CD8-positive, alpha-beta memory T cell (primary cell): ENCODE measurements at regions of chr16 and their contacts with region 1.

Region 1: DNA sequence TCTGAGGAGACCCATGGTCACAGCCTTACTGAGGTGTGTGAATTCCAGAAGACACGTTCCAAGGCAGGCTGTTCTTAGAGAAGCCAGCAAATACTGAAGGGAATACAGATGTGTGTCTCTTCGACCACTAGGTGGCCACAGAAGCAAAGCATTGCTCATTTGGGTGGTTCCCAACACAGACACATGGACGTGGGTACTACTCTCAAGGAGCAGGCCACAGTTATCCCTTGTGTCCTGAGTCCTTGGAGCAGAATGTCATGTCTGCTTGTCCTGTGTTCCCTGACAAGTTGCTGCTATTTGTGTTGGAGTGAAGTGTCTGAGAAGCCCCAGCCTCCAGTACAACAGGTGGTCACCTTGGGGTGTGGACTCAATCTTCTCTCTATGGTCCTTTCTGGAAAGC is 30.3 kb downstream of the HMOX2 start:
- DNase-seq: peak; percentile 26 to 72 (median 59)
- H3K4me3 ChIP-seq: peak overlapping the region; percentile 65
- H3K4me3 Mint-ChIP-seq: peak overlapping the region; percentile 55 to 85 (median 77)
- H3K27ac ChIP-seq: peak overlapping the region; percentile 72
- H3K27ac Mint-ChIP-seq: peak overlapping the region; percentile 94 to 100 (median 98)
- H3K4me1 ChIP-seq: peaks cover 54% of the 10 kb centered on the region
- H3K4me1 Mint-ChIP-seq: peaks cover 53 to 67% (median 58%) of the 10 kb centered on the region in 3 donors
- H3K27me3 ChIP-seq: no peaks in the 10 kb centered on the region
- H3K27me3 Mint-ChIP-seq: peaks cover 0 to 2% of the 10 kb centered on the region in 2 donors

Region 2: GRCh38 chr16:4350787-4351659 is 155.4 kb before region 1 on chr16 and contains the start of gene PAM16:
- CTCF ChIA-PET with region 1: no interaction called
- POLR2A ChIA-PET with region 1: no interaction called
- DNase-seq: peak; percentile 98
- H3K4me3 ChIP-seq: peak within 1 kb of the TSS; percentile 70
- H3K4me3 Mint-ChIP-seq: peak within 1 kb of the TSS; percentile 91 to 99 (median 93)
- H3K27ac ChIP-seq: peak within 1 kb of the TSS; percentile 73
- H3K27ac Mint-ChIP-seq: peak within 1 kb of the TSS; percentile 84 to 99 (median 92)
- H3K4me1 ChIP-seq: peaks cover 16% of the 10 kb centered on the region
- H3K4me1 Mint-ChIP-seq: peaks cover 20 to 41% (median 27%) of the 10 kb centered on the region in 3 donors
- H3K27me3 ChIP-seq: no peaks in the 10 kb centered on the region
- H3K27me3 Mint-ChIP-seq: peaks cover 0 to 3% of the 10 kb centered on the region in 2 donors
- total RNA-seq, gene PAM16: 66.6 to 70.2 TPM

Region 3: DNA sequence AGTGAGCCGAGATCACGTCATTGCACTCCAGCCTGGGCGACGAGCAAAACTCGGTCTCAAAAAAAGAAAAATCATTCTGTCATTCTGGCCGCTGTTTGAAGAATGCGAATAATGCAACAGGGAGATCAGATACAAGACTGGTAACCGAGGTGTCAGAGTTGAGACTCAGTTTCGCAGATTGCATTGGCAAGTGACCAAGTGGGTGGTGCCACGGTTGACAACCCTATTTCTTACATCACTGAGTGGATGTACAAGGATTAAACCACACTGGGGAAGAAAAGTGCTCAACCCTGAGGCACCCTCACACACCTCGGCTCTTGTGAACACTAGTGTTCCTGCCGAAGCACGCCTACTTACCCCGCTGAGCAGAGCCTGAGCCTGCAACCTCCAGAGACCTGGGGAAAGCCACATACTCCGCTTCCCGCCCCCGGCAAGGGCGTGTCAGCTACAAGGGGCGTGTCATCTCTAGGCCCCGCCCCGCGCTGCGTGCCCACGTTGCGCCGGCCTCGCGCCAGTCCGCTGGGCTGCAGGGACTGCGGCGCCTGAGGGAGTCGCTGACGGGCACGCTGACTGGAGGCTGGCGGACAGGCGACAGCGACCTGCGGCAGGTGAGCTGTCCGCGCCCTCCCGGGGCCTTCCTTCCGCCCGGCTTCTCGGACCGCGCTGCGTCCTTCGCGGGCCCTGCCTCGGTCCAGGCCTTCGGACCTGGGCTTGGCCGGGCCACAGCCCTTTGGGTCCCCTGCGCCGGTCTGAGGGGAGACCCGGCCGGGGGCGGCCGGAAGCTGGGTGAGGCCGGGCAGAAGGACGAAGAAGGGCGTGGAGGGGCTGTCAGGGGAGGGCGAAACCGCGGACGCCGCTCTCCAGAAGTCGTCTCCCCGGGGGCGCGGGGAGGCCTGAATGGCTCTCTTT is 30.3 kb before region 1 on chr16 and contains the start of gene HMOX2:
- CTCF ChIA-PET with region 1: interaction called, 87 read pairs
- POLR2A ChIA-PET with region 1: interaction called, 42 read pairs
- DNase-seq: peak; percentile 87 to 93 (median 91)
- H3K4me3 ChIP-seq: peak within 1 kb of the TSS; percentile 55
- H3K4me3 Mint-ChIP-seq: peak within 1 kb of the TSS; percentile 92 to 99 (median 93)
- H3K27ac ChIP-seq: peak within 1 kb of the TSS; percentile 85
- H3K27ac Mint-ChIP-seq: peak within 1 kb of the TSS; percentile 85 to 97 (median 94)
- H3K4me1 ChIP-seq: peaks cover 44% of the 10 kb centered on the region
- H3K4me1 Mint-ChIP-seq: peaks cover 38 to 58% (median 52%) of the 10 kb centered on the region in 3 donors
- H3K27me3 ChIP-seq: no peaks in the 10 kb centered on the region
- H3K27me3 Mint-ChIP-seq: no peaks in the 10 kb centered on the region
- total RNA-seq, gene HMOX2: 87.5 to 95.2 TPM

Region 4: DNA sequence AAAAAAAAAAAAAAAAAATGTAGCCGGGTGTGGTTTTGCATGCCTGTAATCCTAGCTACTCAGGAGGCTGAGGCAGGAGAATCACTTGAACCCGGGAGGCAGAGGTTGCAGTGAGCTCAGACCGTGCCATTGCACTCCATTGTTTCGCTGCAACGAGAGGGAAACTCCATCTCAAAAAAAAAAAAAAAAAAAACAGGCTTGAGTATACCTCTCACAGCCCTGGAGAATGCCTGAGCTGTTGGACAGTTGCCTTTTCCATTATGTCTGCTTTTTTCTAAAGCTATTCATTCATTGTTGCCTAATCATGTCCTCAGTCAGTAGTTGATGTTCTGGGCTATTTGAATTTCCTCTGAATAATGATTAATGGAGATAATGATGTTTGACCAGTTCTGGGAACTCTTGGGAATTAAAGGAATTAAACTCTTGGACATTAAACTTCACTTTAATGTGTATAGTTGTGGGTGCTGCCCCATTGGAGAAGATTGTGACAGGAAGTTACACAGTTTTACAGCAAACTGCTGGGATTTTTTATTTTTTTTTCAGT is 18.4 kb before region 1 on chr16:
- CTCF ChIA-PET with region 1: interaction called, 27 read pairs
- POLR2A ChIA-PET with region 1: interaction called, 14 read pairs
- DNase-seq: no peak
- H3K4me3 ChIP-seq: peak overlapping the region; percentile 20
- H3K4me3 Mint-ChIP-seq: peak overlapping the region; percentile 51 to 79 (median 70)
- H3K27ac ChIP-seq: peak overlapping the region; percentile 51
- H3K27ac Mint-ChIP-seq: peak overlapping the region; percentile 90 to 99 (median 94)
- H3K4me1 ChIP-seq: peaks cover 64% of the 10 kb centered on the region
- H3K4me1 Mint-ChIP-seq: peaks cover 51 to 74% (median 66%) of the 10 kb centered on the region in 3 donors
- H3K27me3 ChIP-seq: no peaks in the 10 kb centered on the region
- H3K27me3 Mint-ChIP-seq: no peaks in the 10 kb centered on the region

Region 5: GRCh38 chr16:4538350-4539235 is 32.1 kb after region 1 on chr16 and contains the start of gene CDIP1:
- CTCF ChIA-PET with region 1: interaction called, 11 read pairs
- POLR2A ChIA-PET with region 1: interaction called, 5 read pairs
- DNase-seq: peak; percentile 84 to 96 (median 90)
- H3K4me3 ChIP-seq: peak within 1 kb of the TSS; percentile 75
- H3K4me3 Mint-ChIP-seq: peak within 1 kb of the TSS; percentile 79 to 93 (median 85)
- H3K27ac ChIP-seq: peak within 1 kb of the TSS; percentile 80
- H3K27ac Mint-ChIP-seq: peak within 1 kb of the TSS in 7 of 8 donors; percentile 90 to 97 (median 91)
- H3K4me1 ChIP-seq: peaks cover 33% of the 10 kb centered on the region
- H3K4me1 Mint-ChIP-seq: peaks cover 29 to 39% (median 33%) of the 10 kb centered on the region in 3 donors
- H3K27me3 ChIP-seq: no peaks in the 10 kb centered on the region
- H3K27me3 Mint-ChIP-seq: no peaks in the 10 kb centered on the region
- total RNA-seq, gene CDIP1: 28.4 to 32.1 TPM

Region 6: DNA sequence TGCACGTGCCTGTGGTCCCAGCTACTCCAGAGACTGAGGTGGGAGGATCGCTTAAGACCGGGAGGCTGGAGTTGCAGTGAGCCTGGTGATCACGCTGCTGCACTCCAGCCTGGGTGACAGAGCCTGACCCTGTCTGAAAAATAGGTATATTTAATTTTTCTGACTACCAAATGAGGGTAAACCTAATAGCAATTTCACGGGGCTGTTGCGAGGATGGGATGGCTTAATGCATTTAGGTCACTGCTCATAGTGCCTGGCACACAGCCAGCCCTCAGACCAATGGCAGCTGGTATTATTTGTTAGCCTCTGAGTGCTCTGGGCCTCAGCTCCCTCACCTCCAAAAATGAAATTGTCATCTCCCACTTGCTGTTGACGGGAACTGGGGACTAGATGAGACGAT is 38.0 kb after region 1 on chr16:
- CTCF ChIA-PET with region 1: interaction called, 95 read pairs
- POLR2A ChIA-PET with region 1: interaction called, 3 read pairs
- DNase-seq: no peak
- H3K4me3 ChIP-seq: no peak overlapping the region
- H3K4me3 Mint-ChIP-seq: no peak overlapping the region
- H3K27ac ChIP-seq: no peak overlapping the region
- H3K27ac Mint-ChIP-seq: peak overlapping the region in 1 of 8 donors; percentile 8
- H3K4me1 ChIP-seq: no peaks in the 10 kb centered on the region
- H3K4me1 Mint-ChIP-seq: peaks cover 2 to 5% (median 4%) of the 10 kb centered on the region in 3 donors
- H3K27me3 ChIP-seq: no peaks in the 10 kb centered on the region
- H3K27me3 Mint-ChIP-seq: peaks cover 0 to 3% of the 10 kb centered on the region in 2 donors

Region 7: DNA sequence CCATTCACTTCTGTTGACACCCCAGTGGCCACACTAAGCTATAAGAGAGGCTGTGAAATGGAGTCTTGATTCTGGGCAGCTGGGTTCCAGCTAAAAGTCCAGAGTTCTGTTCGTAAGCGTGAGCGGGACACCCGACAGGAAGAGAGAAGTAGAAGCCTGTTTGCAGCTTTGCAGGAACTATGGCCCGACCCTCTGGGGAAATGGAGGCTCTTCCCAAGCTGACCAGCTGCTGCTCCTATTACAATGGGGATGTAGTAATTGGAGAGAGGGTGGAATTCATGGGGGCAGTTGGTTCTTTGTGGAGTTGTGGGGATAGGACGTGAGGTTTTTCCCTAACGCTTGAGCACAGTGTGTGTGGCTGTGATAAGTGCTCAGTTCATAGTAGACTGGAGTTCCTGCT is 79.8 kb after region 1 on chr16:
- CTCF ChIA-PET with region 1: interaction called, 12 read pairs
- POLR2A ChIA-PET with region 1: no interaction called
- DNase-seq: no peak
- H3K4me3 ChIP-seq: no peak overlapping the region
- H3K4me3 Mint-ChIP-seq: no peak overlapping the region
- H3K27ac ChIP-seq: no peak overlapping the region
- H3K27ac Mint-ChIP-seq: no peak overlapping the region
- H3K4me1 ChIP-seq: no peaks in the 10 kb centered on the region
- H3K4me1 Mint-ChIP-seq: peaks cover 0 to 3% (median 2%) of the 10 kb centered on the region in 3 donors
- H3K27me3 ChIP-seq: peaks cover 5% of the 10 kb centered on the region
- H3K27me3 Mint-ChIP-seq: peaks cover 9 to 10% of the 10 kb centered on the region in 2 donors

Region 8: GRCh38 chr16:4624015-4624826 is 117.8 kb after region 1 on chr16 and contains the start of gene MGRN1:
- CTCF ChIA-PET with region 1: interaction called, 22 read pairs
- POLR2A ChIA-PET with region 1: no interaction called
- DNase-seq: peak; percentile 85 to 93 (median 91)
- H3K4me3 ChIP-seq: peak within 1 kb of the TSS; percentile 67
- H3K4me3 Mint-ChIP-seq: peak within 1 kb of the TSS; percentile 88 to 98 (median 94)
- H3K27ac ChIP-seq: peak within 1 kb of the TSS; percentile 94
- H3K27ac Mint-ChIP-seq: peak within 1 kb of the TSS; percentile 84 to 100 (median 98)
- H3K4me1 ChIP-seq: peaks cover 24% of the 10 kb centered on the region
- H3K4me1 Mint-ChIP-seq: peaks cover 28 to 41% (median 38%) of the 10 kb centered on the region in 3 donors
- H3K27me3 ChIP-seq: no peaks in the 10 kb centered on the region
- H3K27me3 Mint-ChIP-seq: no peaks in the 10 kb centered on the region
- total RNA-seq, gene MGRN1: 67.3 to 69.7 TPM